Breast epithelium (tissue), 4 donors: ENCODE measurements at regions of chr5 and their contacts with region 1.

Region 1: DNA sequence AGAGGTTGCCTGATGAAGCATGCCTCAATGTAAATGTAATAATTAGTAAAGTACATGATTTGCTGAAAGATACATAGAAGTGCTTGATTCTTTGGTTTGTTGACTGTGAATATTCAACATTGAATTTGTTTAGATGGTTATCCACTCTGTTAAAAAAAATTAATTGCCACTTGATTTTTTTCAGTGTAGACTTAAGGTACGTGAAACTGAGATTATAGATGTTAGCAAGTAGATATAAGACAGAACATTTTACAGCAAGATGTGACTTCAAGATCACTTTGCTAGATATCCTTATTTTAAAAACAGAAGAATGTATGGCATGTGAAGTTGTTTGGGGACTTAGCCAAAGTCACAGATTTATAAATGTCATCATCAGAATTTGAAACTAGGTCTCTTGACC is 866.3 kb upstream of the NUDT12 start:
- DNase-seq: no peak
- H3K4me3 ChIP-seq: no peak overlapping the region
- H3K27ac ChIP-seq: no peak overlapping the region
- H3K4me1 ChIP-seq: no peaks in the 10 kb centered on the region
- H3K27me3 ChIP-seq: no peaks in the 10 kb centered on the region
- CTCF ChIP-seq: no peak
- POLR2A ChIP-seq: no peak

Region 2: GRCh38 chr5:104661256-104661655 is 232.4 kb after region 1 on chr5:
- intact Hi-C with region 1: loop called (anchors 5 kb)
- DNase-seq: no peak
- H3K4me3 ChIP-seq: no peak overlapping the region
- H3K27ac ChIP-seq: no peak overlapping the region
- H3K4me1 ChIP-seq: no peaks in the 10 kb centered on the region
- H3K27me3 ChIP-seq: no peaks in the 10 kb centered on the region
- CTCF ChIP-seq: no peak
- POLR2A ChIP-seq: no peak